ENCODE measurements at regions of chr7 and their contacts with region 1.

Region 1: DNA sequence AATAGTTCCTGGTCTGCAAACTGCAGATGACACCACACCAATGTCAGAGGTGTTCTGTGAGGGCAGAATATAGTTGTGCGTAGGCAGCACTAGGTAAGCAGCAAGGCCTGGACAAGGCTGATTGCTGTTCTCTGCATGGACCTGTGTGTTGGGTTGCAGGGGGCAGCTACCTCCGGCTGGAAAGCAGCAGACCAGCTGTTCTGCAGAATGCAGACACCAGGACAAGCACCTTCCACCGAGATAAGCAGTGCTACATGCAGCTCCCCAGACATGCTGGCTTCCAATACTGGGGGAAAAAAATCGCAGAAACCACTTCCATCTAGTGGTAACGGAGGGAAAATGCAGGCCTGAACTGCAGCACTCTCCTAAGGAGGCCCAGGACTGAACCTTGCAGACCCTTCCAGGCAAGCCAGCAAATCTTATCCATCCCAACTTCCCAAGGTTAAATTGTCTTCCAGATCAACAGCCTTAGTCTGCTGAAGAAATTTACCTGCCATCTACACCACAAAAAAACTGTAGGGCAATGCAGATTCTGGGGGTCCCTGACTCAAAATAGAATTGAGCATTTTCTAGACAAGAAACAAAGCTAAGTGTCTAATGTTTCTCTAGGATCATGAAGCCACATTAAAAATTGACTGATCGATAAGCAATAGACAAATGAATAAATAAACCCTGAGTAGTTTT is 50.5 kb upstream of the COBL start:
- DNase-seq: peak; percentile 62
- H3K4me3 Mint-ChIP-seq: no peak overlapping the region
- H3K27ac Mint-ChIP-seq: no peak overlapping the region
- H3K4me1 Mint-ChIP-seq: peaks cover 5% of the 10 kb centered on the region
- H3K27me3 Mint-ChIP-seq: peaks cover 11% of the 10 kb centered on the region
- CTCF ChIP-seq: peak; percentile 76

Region 2: DNA sequence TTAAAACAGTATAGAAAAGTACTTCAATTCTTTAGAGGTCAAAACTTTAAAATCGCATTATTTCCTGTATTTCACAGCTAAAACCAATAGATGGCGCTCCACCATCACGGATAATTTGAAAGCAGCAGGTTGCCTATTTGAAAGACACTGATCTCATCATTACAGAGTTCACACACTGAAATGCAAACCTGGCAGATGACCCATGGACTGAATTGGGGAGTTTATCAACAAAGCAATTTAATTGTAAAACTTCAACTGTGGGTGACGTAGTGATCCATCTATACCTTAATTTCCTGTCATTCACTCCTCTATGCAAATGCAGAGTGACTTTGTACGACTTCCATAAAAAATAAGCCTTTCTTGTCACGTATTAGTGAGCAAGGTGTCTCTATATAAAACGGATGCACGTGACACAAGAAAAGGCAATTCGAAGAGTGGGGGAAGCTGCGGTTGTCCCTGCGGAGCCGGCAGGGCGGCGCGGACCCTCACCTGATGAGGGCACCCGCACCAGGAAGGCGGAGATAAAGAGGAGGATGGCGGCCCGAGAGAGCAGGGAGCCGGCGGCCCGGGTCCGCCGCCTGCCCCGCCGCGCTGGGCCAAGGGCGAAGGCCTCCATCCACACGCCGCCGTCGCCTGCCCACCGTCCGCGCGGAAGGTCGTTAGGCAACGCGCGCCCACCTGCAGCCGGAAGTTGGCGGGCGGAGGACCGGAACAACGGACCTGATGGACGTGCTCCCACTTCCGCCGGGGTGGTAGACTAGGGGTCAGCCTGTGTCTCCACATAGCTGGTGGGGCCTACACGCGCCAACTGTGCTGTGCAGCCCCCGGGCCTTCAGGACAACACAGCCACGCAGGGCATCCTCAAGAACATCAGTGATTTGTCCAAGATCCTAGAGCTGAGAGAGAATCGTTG is 1274.2 kb before region 1 on chr7 and contains the start of gene ZPBP:
- CTCF ChIA-PET with region 1: interaction called, 7 read pairs
- POLR2A ChIA-PET with region 1: no interaction called
- intact Hi-C with region 1: loop called (anchors 5 kb)
- DNase-seq: peak; percentile 52
- H3K4me3 Mint-ChIP-seq: no peak within 1 kb of the TSS
- H3K27ac Mint-ChIP-seq: no peak within 1 kb of the TSS
- H3K4me1 Mint-ChIP-seq: no peaks in the 10 kb centered on the region
- H3K27me3 Mint-ChIP-seq: peaks cover 60% of the 10 kb centered on the region
- CTCF ChIP-seq: peak; percentile 61
- total RNA-seq, gene ZPBP: not detected in 2 replicates

Region 3: GRCh38 chr7:51175316-51175991 is 191.6 kb before region 1 on chr7:
- CTCF ChIA-PET with region 1: interaction called, 15 read pairs
- POLR2A ChIA-PET with region 1: no interaction called
- intact Hi-C with region 1: no loop called
- DNase-seq: no peak
- H3K4me3 Mint-ChIP-seq: no peak overlapping the region
- H3K27ac Mint-ChIP-seq: no peak overlapping the region
- H3K4me1 Mint-ChIP-seq: no peaks in the 10 kb centered on the region
- H3K27me3 Mint-ChIP-seq: no peaks in the 10 kb centered on the region
- CTCF ChIP-seq: no peak

Region 4: DNA sequence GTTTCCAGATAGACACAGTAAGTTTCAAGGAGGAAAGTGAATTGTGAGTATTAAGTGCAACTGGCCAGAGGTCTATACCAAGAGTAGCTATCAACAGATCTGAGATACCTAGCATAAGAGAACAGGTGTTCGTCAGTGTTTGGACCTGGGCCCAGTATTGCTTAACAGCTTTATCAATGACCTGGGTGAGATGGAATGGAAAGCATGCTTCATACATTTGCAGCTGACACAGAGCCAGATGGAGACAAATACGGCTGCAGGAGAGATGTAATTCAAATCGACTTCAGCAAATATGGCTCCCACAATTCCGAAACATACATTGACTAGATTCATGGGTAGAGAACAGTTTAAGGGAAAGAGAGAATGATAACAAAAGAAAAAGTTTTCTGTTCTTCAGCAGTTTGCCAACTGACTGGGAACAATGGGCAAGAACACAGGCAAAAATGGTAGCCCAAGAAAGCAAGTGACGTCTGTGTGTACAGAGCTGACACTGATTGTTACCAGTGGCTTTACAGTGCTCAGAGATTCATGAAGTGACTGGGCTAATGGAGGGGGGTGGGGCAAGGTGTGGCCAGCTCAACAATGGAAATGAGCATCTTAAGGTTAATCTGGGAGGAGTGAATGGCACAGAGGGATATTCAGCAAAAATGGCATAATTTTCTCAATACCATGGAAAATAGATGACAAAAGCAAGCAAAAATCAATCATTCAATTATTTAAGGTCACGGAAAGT is 22.5 kb before region 1 on chr7:
- CTCF ChIA-PET with region 1: interaction called, 116 read pairs
- POLR2A ChIA-PET with region 1: no interaction called
- intact Hi-C with region 1: no loop called
- DNase-seq: peak; percentile 73
- H3K4me3 Mint-ChIP-seq: no peak overlapping the region
- H3K27ac Mint-ChIP-seq: no peak overlapping the region
- H3K4me1 Mint-ChIP-seq: peaks cover 16% of the 10 kb centered on the region
- H3K27me3 Mint-ChIP-seq: no peaks in the 10 kb centered on the region
- CTCF ChIP-seq: no peak

Region 5: GRCh38 chr7:51430480-51431086 is 63.5 kb after region 1 on chr7:
- CTCF ChIA-PET with region 1: no interaction called
- POLR2A ChIA-PET with region 1: no interaction called
- intact Hi-C with region 1: loop called (anchors 10 kb)
- DNase-seq: peak; percentile 67
- H3K4me3 Mint-ChIP-seq: no peak overlapping the region
- H3K27ac Mint-ChIP-seq: no peak overlapping the region
- H3K4me1 Mint-ChIP-seq: no peaks in the 10 kb centered on the region
- H3K27me3 Mint-ChIP-seq: peaks cover 83% of the 10 kb centered on the region
- CTCF ChIP-seq: peak; percentile 84